Caco-2 (cell line): ENCODE measurements at regions of chr7 and their contacts with region 1.

Region 1: GRCh38 chr7:149662591-149663095 is 110.7 kb downstream of the ZNF467 start:
- DNase-seq: peak; percentile 66 to 70
- H3K4me3 ChIP-seq: no peak overlapping the region
- H3K4me3 Mint-ChIP-seq: no peak overlapping the region
- H3K27ac Mint-ChIP-seq: no peak overlapping the region
- H3K4me1 ChIP-seq: no peaks in the 10 kb centered on the region
- H3K4me1 Mint-ChIP-seq: no peaks in the 10 kb centered on the region
- H3K27me3 ChIP-seq: no peaks in the 10 kb centered on the region
- H3K27me3 Mint-ChIP-seq: peaks cover 12% of the 10 kb centered on the region
- CTCF ChIP-seq: peak; percentile 38 to 69

Region 2: DNA sequence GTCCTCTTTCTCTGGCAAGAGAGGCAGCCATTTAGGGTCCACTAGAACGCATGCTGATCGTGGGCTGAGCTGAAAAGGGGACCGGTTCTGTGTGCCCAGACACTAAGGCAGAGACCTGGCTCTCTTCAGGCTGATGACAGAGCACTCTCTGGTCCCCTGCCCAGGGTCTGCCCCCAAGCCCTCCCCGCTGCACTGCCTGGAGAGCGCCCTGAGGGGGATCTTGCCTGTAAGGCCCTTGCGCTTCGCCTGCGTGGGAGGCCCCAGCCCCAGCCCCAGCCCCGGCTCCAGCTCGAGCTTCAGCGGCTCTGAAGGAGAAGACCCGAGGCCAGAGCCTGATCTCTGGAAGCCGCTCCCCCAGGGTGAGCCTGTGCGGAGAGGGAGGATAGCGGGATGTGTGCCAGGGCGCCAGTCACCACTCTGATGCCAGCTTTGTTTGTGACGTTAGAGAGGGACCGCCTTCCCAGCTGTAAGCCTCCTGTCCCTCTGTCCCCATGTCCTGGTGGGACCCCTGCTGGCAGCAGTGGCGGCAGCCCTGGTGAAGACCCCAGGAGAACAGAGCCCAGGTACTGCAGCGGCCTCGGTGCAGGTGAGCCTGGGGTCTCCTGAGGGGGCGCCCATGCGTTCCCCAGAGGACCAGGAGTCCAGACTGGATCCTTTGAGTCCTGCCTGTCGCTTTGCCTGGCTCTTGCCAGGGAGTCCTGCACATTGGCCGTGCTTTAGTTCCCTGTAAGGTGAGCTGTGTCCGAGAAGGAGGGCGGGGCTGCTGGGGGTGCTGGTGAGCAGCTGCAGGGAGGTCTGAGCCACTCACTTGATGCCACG is 67.5 kb after region 1 on chr7:
- CTCF ChIA-PET with region 1: interaction called, 10 read pairs
- POLR2A ChIA-PET with region 1: no interaction called
- intact Hi-C with region 1: no loop called
- DNase-seq: no peak
- H3K4me3 ChIP-seq: no peak overlapping the region
- H3K4me3 Mint-ChIP-seq: no peak overlapping the region
- H3K27ac Mint-ChIP-seq: no peak overlapping the region
- H3K4me1 ChIP-seq: peaks cover 3% of the 10 kb centered on the region; the same call in 1 of the 2 replicates
- H3K4me1 Mint-ChIP-seq: no peaks in the 10 kb centered on the region
- H3K27me3 ChIP-seq: no peaks in the 10 kb centered on the region
- H3K27me3 Mint-ChIP-seq: peaks cover 3% of the 10 kb centered on the region
- CTCF ChIP-seq: peak in 1 of 2 experiments; percentile 24

Region 3: GRCh38 chr7:149753401-149754233 is 91.0 kb after region 1 on chr7:
- CTCF ChIA-PET with region 1: no interaction called
- POLR2A ChIA-PET with region 1: no interaction called
- intact Hi-C with region 1: loop called (anchors 1 kb)
- DNase-seq: peak; percentile 65 to 70
- H3K4me3 ChIP-seq: no peak overlapping the region
- H3K4me3 Mint-ChIP-seq: no peak overlapping the region
- H3K27ac Mint-ChIP-seq: no peak overlapping the region
- H3K4me1 ChIP-seq: no peaks in the 10 kb centered on the region
- H3K4me1 Mint-ChIP-seq: peaks cover 10% of the 10 kb centered on the region
- H3K27me3 ChIP-seq: no peaks in the 10 kb centered on the region
- H3K27me3 Mint-ChIP-seq: peaks cover 2% of the 10 kb centered on the region
- CTCF ChIP-seq: peak; percentile 49 to 71

Region 4: GRCh38 chr7:149873074-149873969 is 210.7 kb after region 1 on chr7 and contains the start of gene ATP6V0E2:
- CTCF ChIA-PET with region 1: no interaction called
- POLR2A ChIA-PET with region 1: no interaction called
- intact Hi-C with region 1: no loop called
- DNase-seq: peak; percentile 96
- H3K4me3 ChIP-seq: peak within 1 kb of the TSS; percentile 71
- H3K4me3 Mint-ChIP-seq: peak within 1 kb of the TSS; percentile 70
- H3K27ac Mint-ChIP-seq: peak within 1 kb of the TSS; percentile 63
- H3K4me1 ChIP-seq: peaks cover 9% of the 10 kb centered on the region; the same call in 1 of the 2 replicates
- H3K4me1 Mint-ChIP-seq: peaks cover 22% of the 10 kb centered on the region
- H3K27me3 ChIP-seq: no peaks in the 10 kb centered on the region
- H3K27me3 Mint-ChIP-seq: no peaks in the 10 kb centered on the region
- CTCF ChIP-seq: no peak
- total RNA-seq, gene ATP6V0E2: 41.6 and 53.9 TPM in 2 replicates